HEK293T (cell line): ENCODE measurements at regions of chr12 and their contacts with region 1.

Region 1: DNA sequence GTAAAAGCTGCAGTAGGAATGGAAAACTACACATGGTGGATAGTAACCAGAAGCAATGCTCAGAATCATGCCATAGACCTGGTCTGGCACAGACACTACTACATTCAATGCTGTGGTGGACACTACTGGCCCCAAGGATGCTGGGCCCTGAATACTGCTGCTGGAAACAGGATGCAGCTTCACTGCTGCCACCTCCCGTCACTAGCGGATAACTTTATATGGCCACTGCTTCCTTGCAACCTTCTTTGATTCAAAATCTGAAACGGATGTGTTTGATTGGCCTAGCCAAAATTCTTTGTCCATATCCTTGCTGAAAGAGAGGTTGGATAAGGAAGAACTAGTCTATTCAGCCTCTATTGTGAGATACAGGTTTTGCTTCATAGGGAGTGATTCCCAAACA is 30.7 kb downstream of the ADCY6 start:
- DNase-seq: no peak

Region 2: GRCh38 chr12:48286665-48287064 is 471.6 kb before region 1 on chr12:
- CTCF ChIA-PET with region 1: no interaction called
- POLR2A ChIA-PET with region 1: no interaction called
- DNase-seq: peak; percentile 26

Region 3: GRCh38 chr12:48795480-48796455 is 37.5 kb after region 1 on chr12:
- CTCF ChIA-PET with region 1: interaction called, 42 read pairs
- POLR2A ChIA-PET with region 1: interaction called, 5 read pairs
- DNase-seq: peak; percentile 85